ENCODE measurements at regions of chr16 and their contacts with region 1.

Region 1: GRCh38 chr16:67641779-67642708 is 2.9 kb upstream of the CARMIL2 start:
- DNase-seq: no peak
- ATAC-seq: no peak
- H3K4me3 Mint-ChIP-seq: no peak overlapping the region
- H3K27ac Mint-ChIP-seq: no peak overlapping the region
- H3K4me1 Mint-ChIP-seq: peaks cover 15% of the 10 kb centered on the region
- H3K27me3 Mint-ChIP-seq: no peaks in the 10 kb centered on the region

Region 2: GRCh38 chr16:67480833-67481560 is 161.0 kb before region 1 on chr16 and contains the start of gene ATP6V0D1:
- CTCF ChIA-PET with region 1: interaction called, 15 read pairs
- DNase-seq: peak; percentile 99
- ATAC-seq: peak; percentile 88
- H3K4me3 Mint-ChIP-seq: peak within 1 kb of the TSS; percentile 99
- H3K27ac Mint-ChIP-seq: peak within 1 kb of the TSS; percentile 99
- H3K4me1 Mint-ChIP-seq: peaks cover 31% of the 10 kb centered on the region
- H3K27me3 Mint-ChIP-seq: no peaks in the 10 kb centered on the region
- total RNA-seq, gene ATP6V0D1: 42.1 to 58.3 TPM

Region 3: GRCh38 chr16:67530013-67530939 is 111.8 kb before region 1 on chr16:
- CTCF ChIA-PET with region 1: interaction called, 17 read pairs
- DNase-seq: no peak
- ATAC-seq: no peak
- H3K4me3 Mint-ChIP-seq: peak overlapping the region; percentile 42
- H3K27ac Mint-ChIP-seq: no peak overlapping the region
- H3K4me1 Mint-ChIP-seq: peaks cover 18% of the 10 kb centered on the region
- H3K27me3 Mint-ChIP-seq: peaks cover 56% of the 10 kb centered on the region

Region 4: DNA sequence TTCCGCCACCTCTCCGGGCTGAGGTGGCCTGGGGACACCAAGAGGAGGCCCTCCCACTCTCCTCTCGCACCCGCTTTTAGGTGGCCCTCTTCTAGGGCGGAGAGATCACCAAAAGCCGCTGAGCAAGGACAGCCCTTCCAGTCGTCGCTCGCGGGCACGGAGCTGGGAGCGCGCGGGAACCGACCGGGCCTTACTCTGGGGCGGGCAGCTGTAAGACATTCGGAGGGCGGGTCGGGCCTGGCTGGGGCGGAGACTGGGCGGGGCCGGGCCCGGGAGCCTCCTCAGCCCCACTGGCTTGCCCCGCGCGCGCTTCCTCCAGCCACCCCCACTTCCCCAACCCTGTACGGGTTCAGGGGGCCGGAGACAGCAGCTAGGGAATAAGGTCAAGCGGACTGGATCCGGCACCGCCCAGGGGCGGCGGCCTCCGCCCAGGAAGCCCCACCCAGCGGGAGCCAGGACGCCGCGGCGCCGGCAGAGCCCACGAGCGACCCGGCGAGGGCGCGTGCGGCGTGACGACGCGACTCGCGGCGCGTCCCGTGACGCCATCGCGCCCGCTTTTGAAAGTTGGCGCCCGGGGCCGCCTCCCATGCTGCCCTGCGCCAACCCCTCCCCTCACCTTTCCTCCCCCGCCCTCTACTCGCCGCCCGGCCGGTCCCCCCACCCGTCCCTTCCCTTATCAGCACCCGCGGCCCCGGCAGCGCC is 80.1 kb before region 1 on chr16:
- CTCF ChIA-PET with region 1: interaction called, 307 read pairs
- DNase-seq: peak; percentile 100
- ATAC-seq: peak; percentile 88
- H3K4me3 Mint-ChIP-seq: peak overlapping the region; percentile 89
- H3K27ac Mint-ChIP-seq: peak overlapping the region; percentile 94
- H3K4me1 Mint-ChIP-seq: peaks cover 44% of the 10 kb centered on the region
- H3K27me3 Mint-ChIP-seq: no peaks in the 10 kb centered on the region

Region 5: DNA sequence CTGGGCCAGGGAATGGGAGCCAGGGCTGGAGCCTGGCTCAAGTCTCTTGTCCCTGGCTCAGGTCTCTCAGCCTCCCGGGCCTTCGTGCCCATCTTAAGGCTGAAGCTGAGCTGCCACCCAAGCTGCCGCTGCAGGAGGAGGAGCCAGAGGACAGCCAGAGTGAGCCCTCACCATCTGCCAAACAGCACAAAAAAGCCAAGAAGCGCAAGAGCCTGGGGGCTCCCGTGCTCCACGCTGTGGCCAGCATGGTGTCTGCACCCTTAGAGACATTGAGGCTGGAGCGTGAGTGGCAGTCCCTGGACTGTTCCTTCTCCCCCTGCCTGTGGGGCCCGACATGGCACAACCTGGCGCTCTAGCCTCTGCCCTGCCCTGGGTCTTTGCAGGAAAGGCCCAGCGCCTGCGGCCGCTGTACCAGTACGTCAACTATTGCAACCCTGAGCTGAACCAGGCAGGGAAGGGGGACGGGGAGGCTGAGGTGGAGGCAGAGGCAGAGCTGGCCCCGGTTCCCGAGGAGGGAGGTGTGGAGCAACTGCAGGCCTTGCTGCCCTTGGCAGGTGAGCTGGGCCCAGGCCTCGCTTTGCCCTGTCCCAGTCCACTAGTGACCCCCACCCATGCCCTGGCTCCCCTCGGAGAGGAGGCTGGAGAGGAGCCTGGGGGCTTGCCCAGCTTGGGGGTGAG is 25.9 kb after region 1 on chr16:
- CTCF ChIA-PET with region 1: interaction called, 28 read pairs
- DNase-seq: peak; percentile 90
- ATAC-seq: peak; percentile 81
- H3K4me3 Mint-ChIP-seq: no peak overlapping the region
- H3K27ac Mint-ChIP-seq: no peak overlapping the region
- H3K4me1 Mint-ChIP-seq: peaks cover 12% of the 10 kb centered on the region
- H3K27me3 Mint-ChIP-seq: no peaks in the 10 kb centered on the region